CD4-positive, alpha-beta memory T cell (primary cell): ENCODE measurements at regions of chr12 and their contacts with region 1.

Region 1: DNA sequence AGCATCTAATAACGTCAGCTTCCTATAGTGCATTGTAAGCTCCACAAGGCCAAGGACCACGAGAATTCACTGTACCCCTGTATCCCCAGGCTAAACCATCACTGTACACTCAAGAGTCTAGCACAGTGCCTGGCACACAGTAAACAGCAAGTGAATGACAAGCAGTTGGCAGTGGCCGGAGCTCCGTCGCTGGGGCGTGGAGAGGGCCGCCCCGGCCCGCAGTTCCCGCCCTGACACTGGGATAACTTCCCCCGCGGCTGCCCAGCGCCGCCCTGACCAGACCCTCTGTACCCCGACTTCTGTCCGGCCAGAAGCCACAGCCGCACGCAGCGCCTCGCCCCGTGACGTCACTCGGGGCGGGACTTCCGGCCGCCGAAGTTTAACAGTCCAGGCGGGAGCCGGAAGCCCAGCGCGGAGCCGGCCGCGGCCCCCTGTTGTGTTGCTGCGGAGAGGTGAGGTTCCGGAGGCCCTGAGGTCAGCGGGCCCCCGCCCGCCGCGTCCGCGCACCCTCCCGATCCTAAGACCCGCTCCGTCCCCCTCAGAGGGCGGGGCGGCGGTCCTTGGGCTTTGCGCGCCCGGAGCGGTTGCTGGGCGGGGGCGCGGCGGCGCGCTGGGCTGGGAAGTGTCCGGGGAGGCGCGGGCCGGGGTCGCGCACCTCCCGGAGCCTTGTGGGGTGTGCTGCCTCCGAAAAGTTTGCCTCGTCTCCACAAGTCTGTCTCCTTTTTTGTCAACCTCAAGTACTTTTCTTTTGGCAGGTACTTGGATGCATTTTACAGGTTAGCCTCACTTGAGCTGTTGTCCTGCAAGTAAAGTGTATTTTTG is at the start of gene NEDD1:
- DNase-seq: peak; percentile 81 to 86 (median 82)
- H3K4me3 ChIP-seq: peak within 1 kb of the TSS; percentile 80 to 97
- H3K4me3 Mint-ChIP-seq: peak within 1 kb of the TSS; percentile 93 to 98 (median 96)
- H3K27ac ChIP-seq: peak within 1 kb of the TSS; percentile 96
- H3K27ac Mint-ChIP-seq: peak within 1 kb of the TSS; percentile 94 to 99 (median 99)
- H3K4me1 ChIP-seq: peaks cover 46% of the 10 kb centered on the region
- H3K4me1 Mint-ChIP-seq: peaks cover 37 to 55% (median 44%) of the 10 kb centered on the region in 4 donors
- H3K27me3 ChIP-seq: no peaks in the 10 kb centered on the region
- H3K27me3 Mint-ChIP-seq: peaks cover 0 to 2% of the 10 kb centered on the region in 2 donors
- total RNA-seq, gene NEDD1: 24.6 to 27.9 TPM

Region 2: DNA sequence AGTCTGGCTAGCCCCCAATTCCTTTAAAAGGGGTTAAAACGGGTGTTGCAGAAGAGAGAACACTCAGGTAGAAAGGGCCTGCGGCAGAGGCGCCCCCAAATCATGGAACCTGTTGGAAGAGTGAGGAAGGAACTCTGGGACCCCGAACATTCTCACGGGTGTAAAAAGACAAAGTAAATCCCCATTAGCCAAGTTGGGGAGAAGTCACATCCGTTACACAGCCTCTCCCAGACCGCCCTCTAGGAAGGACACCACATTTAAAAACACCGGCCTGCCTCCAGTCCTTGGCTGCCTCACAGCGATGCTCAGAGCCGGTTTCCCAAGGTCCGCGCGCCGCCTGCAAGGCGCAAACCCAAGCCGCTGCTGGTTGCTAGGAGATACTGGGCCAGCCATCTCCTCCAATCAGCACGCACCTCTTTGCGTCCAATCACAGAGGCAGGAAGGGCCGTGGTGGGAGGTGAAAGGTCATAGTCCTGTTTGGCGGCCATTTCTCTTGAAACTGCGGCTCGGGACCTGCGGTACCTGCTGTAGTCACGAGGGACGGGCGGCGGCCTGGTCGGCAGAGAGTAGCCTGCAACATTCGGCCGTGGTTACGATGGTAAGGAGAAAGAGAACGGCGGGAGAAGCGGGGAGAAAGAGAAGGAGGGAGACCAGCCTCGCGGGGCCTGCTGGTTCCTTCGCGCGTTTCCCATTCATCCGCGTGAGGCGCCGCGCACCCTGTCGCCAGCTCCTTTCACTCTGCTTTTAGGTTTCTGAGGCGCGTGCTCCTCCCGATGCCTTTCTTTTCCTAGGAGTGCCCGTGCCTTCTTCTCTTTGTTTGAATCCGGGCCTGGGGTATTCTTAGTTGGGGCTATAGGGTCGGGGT is 1048.3 kb before region 1 on chr12 and contains the start of gene SNRPF:
- CTCF ChIA-PET with region 1: no interaction called
- POLR2A ChIA-PET with region 1: no interaction called
- intact Hi-C with region 1: loop called (anchors 2 kb)
- DNase-seq: peak; percentile 93 to 96 (median 94)
- H3K4me3 ChIP-seq: peak within 1 kb of the TSS; percentile 77 to 90
- H3K4me3 Mint-ChIP-seq: peak within 1 kb of the TSS in 1 of 8 donors; percentile 0
- H3K27ac ChIP-seq: peak within 1 kb of the TSS; percentile 75
- H3K27ac Mint-ChIP-seq: peak within 1 kb of the TSS in 1 of 7 donors; percentile 60
- H3K4me1 ChIP-seq: peaks cover 33% of the 10 kb centered on the region
- H3K4me1 Mint-ChIP-seq: peaks cover 13 to 26% (median 17%) of the 10 kb centered on the region in 4 donors
- H3K27me3 ChIP-seq: no peaks in the 10 kb centered on the region
- H3K27me3 Mint-ChIP-seq: no peaks in the 10 kb centered on the region
- total RNA-seq, gene SNRPF: 16.7 to 19.5 TPM

Region 3: DNA sequence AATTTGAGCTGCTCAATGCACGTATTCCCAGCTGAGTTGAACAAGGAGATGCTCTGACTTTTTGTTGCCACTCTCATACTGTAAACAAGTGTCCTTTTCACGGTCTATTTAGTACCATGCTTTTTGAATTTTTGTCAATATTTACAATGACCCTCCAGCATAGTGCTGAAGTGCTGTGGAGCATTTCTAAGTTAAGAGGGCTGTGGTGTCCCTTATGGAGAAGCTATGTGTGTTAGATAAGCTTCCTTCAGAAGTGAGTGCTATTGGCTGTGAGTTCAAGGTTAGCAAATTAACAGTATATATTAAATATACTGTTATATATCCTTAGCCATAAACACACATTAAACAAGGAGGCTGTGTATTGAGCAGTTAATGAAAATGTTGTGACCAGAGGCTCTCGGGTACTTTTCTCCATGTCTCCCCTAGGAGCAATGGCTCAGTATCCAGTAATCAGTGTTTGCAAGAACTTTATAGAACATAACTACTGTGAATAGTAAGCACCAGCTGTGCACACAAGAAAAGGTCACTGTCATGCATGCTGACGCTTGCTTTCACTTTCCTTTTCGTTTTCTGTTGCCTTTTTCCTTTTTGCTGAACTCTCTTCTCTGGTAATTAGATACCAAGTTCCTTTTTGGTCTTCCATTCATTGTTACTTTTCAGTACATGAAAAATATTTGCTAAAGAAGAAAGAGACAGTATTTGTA is 187.2 kb before region 1 on chr12:
- CTCF ChIA-PET with region 1: no interaction called
- POLR2A ChIA-PET with region 1: interaction called, 11 read pairs
- intact Hi-C with region 1: loop called (anchors 2 kb)
- DNase-seq: peak in 3 of 5 donors; percentile 27 to 39 (median 35)
- H3K4me3 ChIP-seq: peak overlapping the region; percentile 61 to 79
- H3K4me3 Mint-ChIP-seq: peak overlapping the region; percentile 89 to 97 (median 94)
- H3K27ac ChIP-seq: peak overlapping the region; percentile 63
- H3K27ac Mint-ChIP-seq: peak overlapping the region; percentile 84 to 98 (median 93)
- H3K4me1 ChIP-seq: peaks cover 12% of the 10 kb centered on the region
- H3K4me1 Mint-ChIP-seq: peaks cover 7 to 18% (median 12%) of the 10 kb centered on the region in 4 donors
- H3K27me3 ChIP-seq: no peaks in the 10 kb centered on the region
- H3K27me3 Mint-ChIP-seq: no peaks in the 10 kb centered on the region

Region 4: DNA sequence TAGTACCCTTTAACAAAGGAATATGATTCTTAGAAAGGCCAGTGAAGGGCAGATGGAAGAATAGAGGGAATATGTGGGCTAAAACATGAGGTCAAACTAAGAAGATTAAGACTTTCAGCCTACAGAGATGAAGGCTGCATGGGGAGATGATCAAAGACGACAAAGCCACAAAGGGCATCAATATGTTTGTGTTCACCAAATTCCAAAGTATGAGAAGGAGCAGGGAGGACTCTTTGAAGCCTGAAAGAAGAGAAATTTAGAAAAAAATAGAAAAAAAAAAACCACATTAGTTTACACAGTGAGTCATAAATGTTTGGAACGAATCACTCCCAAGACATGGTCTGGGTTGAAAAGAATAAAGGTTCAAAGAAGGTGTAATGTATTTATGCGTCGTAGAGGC is 131.8 kb after region 1 on chr12:
- CTCF ChIA-PET with region 1: no interaction called
- POLR2A ChIA-PET with region 1: no interaction called
- intact Hi-C with region 1: no loop called
- DNase-seq: no peak
- H3K4me3 ChIP-seq: no peak overlapping the region
- H3K4me3 Mint-ChIP-seq: no peak overlapping the region
- H3K27ac ChIP-seq: no peak overlapping the region
- H3K27ac Mint-ChIP-seq: no peak overlapping the region
- H3K4me1 ChIP-seq: no peaks in the 10 kb centered on the region
- H3K4me1 Mint-ChIP-seq: no peaks in the 10 kb centered on the region
- H3K27me3 ChIP-seq: no peaks in the 10 kb centered on the region
- H3K27me3 Mint-ChIP-seq: peaks cover 2 to 14% of the 10 kb centered on the region in 2 donors